Dorsolateral prefrontal cortex (tissue), 120 donors: ENCODE measurements at regions of chr5 and their contacts with region 1.

Region 1: DNA sequence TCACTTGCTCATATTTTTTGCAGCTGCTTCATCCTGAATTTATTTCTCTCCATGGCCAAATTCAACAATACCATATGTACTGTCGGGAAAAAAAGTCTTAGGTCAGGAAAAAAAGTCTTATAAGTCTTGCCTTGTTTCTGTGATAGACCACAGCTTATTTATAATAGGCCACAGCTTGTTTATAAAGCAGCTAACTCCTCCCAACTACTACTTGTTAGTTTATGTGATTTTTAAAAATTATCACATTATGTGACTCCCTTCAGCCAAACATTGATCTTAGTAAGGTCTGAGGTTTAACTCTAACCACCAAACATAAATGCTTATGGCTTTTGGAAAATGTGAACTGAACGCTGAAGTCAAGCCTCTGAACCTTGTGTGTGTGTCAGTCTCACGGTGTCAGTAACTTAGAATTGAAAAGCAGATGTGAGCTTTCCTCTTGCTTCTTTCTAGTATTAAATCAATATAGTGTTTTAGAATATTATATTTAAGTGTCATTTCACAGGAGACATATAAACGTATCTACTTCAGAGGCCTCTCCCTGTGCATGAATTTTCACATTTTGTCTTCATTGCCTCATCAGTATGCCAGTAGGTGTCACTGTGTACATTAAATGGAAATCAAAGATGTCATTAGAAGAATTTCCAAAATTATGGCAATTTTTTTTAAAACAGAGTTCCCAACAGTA is 51.3 kb downstream of the SNX24 start:
- DNase-seq: no peak
- H3K4me3 ChIP-seq: no peak overlapping the region
- H3K27ac ChIP-seq: no peak overlapping the region
- H3K27me3 ChIP-seq: no peaks in the 10 kb centered on the region
- CTCF ChIP-seq: peak; percentile 29 to 80 (median 62)

Region 2: GRCh38 chr5:122965111-122965510 is 68.4 kb after region 1 on chr5:
- intact Hi-C with region 1: no loop called
- DNase-seq: no peak
- H3K4me3 ChIP-seq: no peak overlapping the region
- H3K27ac ChIP-seq: no peak overlapping the region
- H3K27me3 ChIP-seq: no peaks in the 10 kb centered on the region
- CTCF ChIP-seq: no peak

Region 3: GRCh38 chr5:123344816-123345426 is 448.2 kb after region 1 on chr5:
- intact Hi-C with region 1: loop called in 1 of 2 experiments (anchors 10 kb)
- DNase-seq: peak in 1 of 10 donors; percentile 19
- H3K4me3 ChIP-seq: peak overlapping the region in 12 of 59 donors; percentile 2 to 31 (median 18)
- H3K27ac ChIP-seq: no peak overlapping the region
- H3K27me3 ChIP-seq: no peaks in the 10 kb centered on the region
- CTCF ChIP-seq: peak in 55 of 56 donors; percentile 47 to 85 (median 71)